ENCODE measurements at regions of chr1 and their contacts with region 1.

Region 1: DNA sequence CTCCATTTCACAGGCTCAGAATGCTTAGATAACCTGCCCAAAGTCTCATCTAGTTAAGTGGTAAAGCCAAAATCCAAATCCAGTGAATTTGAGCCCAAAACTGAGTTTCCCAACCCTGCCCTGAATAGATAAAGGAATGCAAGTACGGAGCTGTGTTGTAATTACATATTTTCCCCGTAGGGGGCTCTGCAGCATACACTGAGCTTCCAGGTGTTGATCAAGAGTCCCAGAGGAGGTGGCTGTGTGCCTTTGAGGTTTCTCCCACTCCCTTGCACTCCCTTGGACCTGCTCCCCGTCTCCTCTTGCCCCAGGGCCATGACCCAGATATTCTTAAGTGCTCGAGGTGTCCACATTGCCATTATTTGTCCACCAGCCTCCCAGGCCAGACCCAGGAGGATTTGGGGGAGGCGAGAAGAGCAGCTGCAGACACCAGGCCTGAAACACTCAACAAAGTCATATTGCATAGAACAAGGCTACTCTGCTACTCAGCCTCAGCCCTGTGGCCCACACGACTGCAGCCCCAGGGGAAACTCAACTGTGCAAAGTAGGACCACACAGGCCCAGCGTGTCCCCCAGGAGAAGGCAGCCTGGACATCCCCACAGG is 18.4 kb upstream of the LY9 start:
- DNase-seq: no peak
- ATAC-seq: peak; percentile 36
- H3K4me3 ChIP-seq: no peak overlapping the region
- H3K27ac ChIP-seq: no peak overlapping the region
- H3K4me1 ChIP-seq: peaks cover 50% of the 10 kb centered on the region
- H3K27me3 ChIP-seq: no peaks in the 10 kb centered on the region
- CTCF ChIP-seq: peak; percentile 66 to 78 (median 67)
- EP300 ChIP-seq: no peak
- POLR2A ChIP-seq: no peak
- RAD21 ChIP-seq: peak; percentile 81

Region 2: DNA sequence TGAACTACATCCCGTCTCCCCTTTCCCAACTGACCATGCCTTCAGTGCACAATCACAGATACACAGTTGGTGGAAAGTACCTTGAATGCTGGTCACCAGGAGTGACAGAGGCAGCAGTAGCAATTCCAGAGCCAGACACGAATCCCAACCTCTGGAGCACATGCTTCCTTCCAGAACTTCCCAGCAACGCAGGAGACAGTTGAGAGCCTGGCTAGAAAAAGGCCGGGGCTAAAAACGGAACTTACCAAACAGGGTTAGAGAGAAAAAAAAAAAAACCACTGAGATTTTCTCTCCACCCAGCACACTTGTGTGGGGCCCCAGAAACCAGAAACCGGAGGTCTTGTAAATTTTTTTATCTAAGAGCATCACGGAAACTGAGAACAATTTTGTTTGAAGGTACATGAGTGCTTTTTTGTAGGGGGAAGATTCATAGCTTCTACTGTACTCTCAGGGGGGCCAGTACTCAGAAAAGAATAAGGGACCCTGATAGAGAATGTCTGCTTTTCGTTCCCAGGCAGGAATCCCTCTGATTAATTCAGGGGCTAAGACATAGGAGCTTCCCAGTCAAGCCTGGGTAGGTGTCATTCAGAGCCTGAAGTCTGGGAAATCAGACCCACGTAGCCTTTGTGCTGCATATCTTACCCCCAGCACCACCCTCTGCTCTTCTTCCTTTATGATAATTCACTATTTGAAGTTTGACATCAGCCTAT is 65.8 kb before region 1 on chr1 and contains the start of gene CD48:
- CTCF ChIA-PET with region 1: interaction called, 22 read pairs
- POLR2A ChIA-PET with region 1: interaction called, 6 read pairs
- RAD21 ChIA-PET with region 1: interaction called, 13 read pairs
- SMC1A ChIA-PET with region 1: interaction called, 14 read pairs
- in situ Hi-C with region 1: no loop called
- intact Hi-C with region 1: no loop called
- DNase-seq: no peak
- ATAC-seq: peak; percentile 56
- H3K4me3 ChIP-seq: peak within 1 kb of the TSS; percentile 93
- H3K27ac ChIP-seq: peak within 1 kb of the TSS; percentile 100
- H3K4me1 ChIP-seq: peaks cover 18% of the 10 kb centered on the region
- H3K27me3 ChIP-seq: no peaks in the 10 kb centered on the region
- CTCF ChIP-seq: no peak
- EP300 ChIP-seq: no peak; a peak in 2 of 4 replicates
- POLR2A ChIP-seq: peak; percentile 81
- RAD21 ChIP-seq: no peak
- polyA plus RNA-seq, gene CD48: 667 to 776 TPM

Region 3: DNA sequence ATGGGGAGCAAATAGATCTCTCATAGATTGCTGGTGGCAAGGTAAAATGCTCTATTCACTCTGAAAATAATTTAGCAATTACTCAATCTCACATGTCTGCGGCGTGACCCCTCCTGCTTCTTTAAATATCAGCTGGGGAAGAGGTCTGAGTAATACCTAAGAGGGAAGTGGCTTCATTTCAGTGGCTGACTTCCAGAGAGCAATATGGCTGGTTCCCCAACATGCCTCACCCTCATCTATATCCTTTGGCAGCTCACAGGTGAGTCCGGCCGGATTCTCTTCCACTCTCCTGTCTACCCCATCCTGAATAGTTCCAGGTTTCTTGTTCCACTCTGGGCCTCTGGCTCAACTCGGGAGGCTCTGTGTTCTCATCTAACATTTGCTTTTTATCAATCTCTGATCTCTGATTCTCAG is 38.5 kb before region 1 on chr1 and contains the start of gene SLAMF7:
- CTCF ChIA-PET with region 1: interaction called, 34 read pairs
- POLR2A ChIA-PET with region 1: interaction called, 33 read pairs
- RAD21 ChIA-PET with region 1: interaction called, 27 read pairs
- SMC1A ChIA-PET with region 1: interaction called, 447 read pairs
- in situ Hi-C with region 1: no loop called
- intact Hi-C with region 1: no loop called
- DNase-seq: peak; percentile 81
- ATAC-seq: peak; percentile 72
- H3K4me3 ChIP-seq: peak within 1 kb of the TSS; percentile 99
- H3K27ac ChIP-seq: peak within 1 kb of the TSS; percentile 78
- H3K4me1 ChIP-seq: peaks cover 34% of the 10 kb centered on the region
- H3K27me3 ChIP-seq: no peaks in the 10 kb centered on the region
- CTCF ChIP-seq: no peak
- EP300 ChIP-seq: peak; percentile 38 to 45; a peak in 2 of 4 replicates
- POLR2A ChIP-seq: peak; percentile 88
- RAD21 ChIP-seq: no peak
- polyA plus RNA-seq, gene SLAMF7: 66.6 to 83.4 TPM

Region 4: GRCh38 chr1:160789702-160790611 is 12.4 kb after region 1 on chr1:
- CTCF ChIA-PET with region 1: interaction called, 192 read pairs
- POLR2A ChIA-PET with region 1: interaction called, 21 read pairs
- RAD21 ChIA-PET with region 1: interaction called, 53 read pairs
- SMC1A ChIA-PET with region 1: interaction called, 86 read pairs
- in situ Hi-C with region 1: no loop called
- intact Hi-C with region 1: no loop called
- DNase-seq: peak; percentile 89
- ATAC-seq: peak; percentile 91
- H3K4me3 ChIP-seq: no peak overlapping the region; the same call in 1 of the 2 replicates
- H3K27ac ChIP-seq: peak overlapping the region; percentile 86
- H3K4me1 ChIP-seq: peaks cover 19% of the 10 kb centered on the region
- H3K27me3 ChIP-seq: no peaks in the 10 kb centered on the region
- CTCF ChIP-seq: no peak
- EP300 ChIP-seq: peak; percentile 96 to 99
- POLR2A ChIP-seq: no peak
- RAD21 ChIP-seq: no peak

Region 5: DNA sequence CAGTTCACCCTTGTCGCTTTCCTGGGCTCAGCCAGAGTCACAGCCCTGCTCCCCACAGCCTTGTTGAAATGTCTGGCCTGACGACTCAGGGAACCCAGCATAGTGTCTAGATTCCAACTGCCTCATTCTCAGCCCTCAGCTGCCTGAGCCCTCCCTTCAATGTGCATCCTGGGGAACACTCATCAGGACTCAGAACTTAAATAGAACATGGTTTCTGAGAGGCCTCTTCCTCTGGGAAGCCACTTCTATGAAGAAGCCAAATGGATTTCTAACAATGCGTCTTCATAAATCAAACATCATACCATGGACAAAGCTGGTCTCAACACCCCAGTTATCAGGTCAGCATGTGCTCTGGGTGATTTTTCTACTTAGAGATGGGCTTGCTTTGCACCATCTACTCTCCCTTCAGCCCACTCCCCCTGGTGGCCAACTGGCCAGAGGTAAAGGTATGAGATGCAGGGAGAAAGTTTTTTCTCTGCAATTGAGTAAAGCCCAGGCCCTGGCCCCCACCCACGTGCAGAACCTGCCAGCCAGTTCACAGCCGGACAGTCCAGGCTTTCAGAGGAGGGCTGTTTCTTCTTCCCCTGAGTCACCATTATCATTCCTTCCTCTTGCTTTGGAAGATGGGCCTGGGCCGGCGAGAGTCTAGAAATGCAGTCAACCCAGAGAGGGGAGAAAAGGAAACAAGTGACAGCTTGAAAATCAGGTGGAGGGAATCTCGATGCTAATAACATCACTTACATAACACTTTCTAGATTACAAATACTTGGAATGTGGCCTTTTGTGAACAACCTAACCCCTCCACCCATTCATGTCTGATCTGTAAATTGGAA is 52.9 kb after region 1 on chr1:
- CTCF ChIA-PET with region 1: interaction called, 188 read pairs
- POLR2A ChIA-PET with region 1: interaction called, 5 read pairs
- RAD21 ChIA-PET with region 1: interaction called, 193 read pairs
- SMC1A ChIA-PET with region 1: interaction called, 143 read pairs
- in situ Hi-C with region 1: loop called (anchors 5 kb)
- intact Hi-C with region 1: loop called (anchors 1 kb)
- DNase-seq: no peak
- ATAC-seq: peak; percentile 98
- H3K4me3 ChIP-seq: no peak overlapping the region
- H3K27ac ChIP-seq: no peak overlapping the region
- H3K4me1 ChIP-seq: no peaks in the 10 kb centered on the region
- H3K27me3 ChIP-seq: no peaks in the 10 kb centered on the region
- CTCF ChIP-seq: peak; percentile 67 to 87 (median 76)
- EP300 ChIP-seq: no peak
- POLR2A ChIP-seq: no peak
- RAD21 ChIP-seq: peak; percentile 84

Region 6: GRCh38 chr1:160868141-160868540 is 90.6 kb after region 1 on chr1:
- CTCF ChIA-PET with region 1: interaction called, 10 read pairs
- POLR2A ChIA-PET with region 1: interaction called, 13 read pairs
- RAD21 ChIA-PET with region 1: interaction called, 23 read pairs
- SMC1A ChIA-PET with region 1: interaction called, 10 read pairs
- in situ Hi-C with region 1: no loop called
- intact Hi-C with region 1: no loop called
- DNase-seq: no peak
- ATAC-seq: 0 out of 3 replicates have a peak, but pooled peaks have one; percentile 16
- H3K4me3 ChIP-seq: no peak overlapping the region
- H3K27ac ChIP-seq: no peak overlapping the region
- H3K4me1 ChIP-seq: peaks cover 5% of the 10 kb centered on the region
- H3K27me3 ChIP-seq: no peaks in the 10 kb centered on the region
- CTCF ChIP-seq: no peak
- EP300 ChIP-seq: no peak
- POLR2A ChIP-seq: no peak
- RAD21 ChIP-seq: no peak

Region 7: GRCh38 chr1:160987359-160988062 is 209.9 kb after region 1 on chr1:
- CTCF ChIA-PET with region 1: interaction called, 12 read pairs
- POLR2A ChIA-PET with region 1: interaction called, 3 read pairs
- RAD21 ChIA-PET with region 1: interaction called, 13 read pairs
- SMC1A ChIA-PET with region 1: interaction called, 7 read pairs
- in situ Hi-C with region 1: no loop called
- intact Hi-C with region 1: no loop called
- DNase-seq: no peak
- ATAC-seq: no peak
- H3K4me3 ChIP-seq: no peak overlapping the region
- H3K27ac ChIP-seq: no peak overlapping the region
- H3K4me1 ChIP-seq: no peaks in the 10 kb centered on the region; the same call in 1 of the 2 replicates
- H3K27me3 ChIP-seq: no peaks in the 10 kb centered on the region
- CTCF ChIP-seq: no peak
- EP300 ChIP-seq: no peak
- POLR2A ChIP-seq: no peak
- RAD21 ChIP-seq: no peak